SK-N-SH (cell line): ENCODE measurements at regions of chr19 and their contacts with region 1.

Region 1: DNA sequence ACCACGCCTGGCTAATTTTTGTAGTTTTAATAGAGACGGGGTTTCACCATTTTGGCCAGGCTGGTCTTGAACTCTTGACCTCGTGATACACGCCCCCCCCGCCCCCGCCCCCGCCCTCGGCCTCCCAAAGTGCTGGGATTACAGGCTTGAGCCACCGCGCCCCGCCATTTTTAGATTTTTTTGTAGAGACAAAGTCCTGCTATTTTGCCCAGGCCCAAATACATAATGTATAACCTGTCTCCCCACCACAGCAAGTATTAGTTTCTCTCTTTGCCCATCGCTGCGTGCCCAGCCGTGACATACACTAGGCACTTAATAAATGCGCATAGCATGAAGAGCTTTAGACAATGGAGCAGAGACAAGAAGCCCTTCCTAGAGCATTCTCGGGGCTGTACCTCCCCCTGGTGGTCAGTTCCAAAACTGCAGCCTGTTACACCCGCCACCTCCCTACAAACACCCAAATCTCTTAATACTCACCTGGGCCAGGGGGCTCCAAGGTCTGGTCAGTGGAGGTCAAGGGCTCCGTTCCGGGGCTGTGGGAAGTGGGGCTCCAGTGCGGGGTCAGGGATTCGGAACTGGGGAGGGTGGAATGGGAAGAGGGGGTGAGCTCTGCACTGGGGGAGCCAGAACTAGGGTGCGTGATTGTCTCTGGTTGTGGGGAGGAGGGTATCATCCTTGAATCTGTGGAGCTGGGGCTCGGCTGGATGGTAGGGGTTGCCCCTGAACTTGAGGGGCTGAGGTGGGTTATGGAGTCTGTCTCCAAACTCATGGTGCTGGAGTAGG is 22.5 kb downstream of the IQCN start:
- DNase-seq: peak; percentile 86
- H3K4me3 ChIP-seq: no peak overlapping the region
- H3K27ac ChIP-seq: no peak overlapping the region
- H3K4me1 ChIP-seq: no peaks in the 10 kb centered on the region
- H3K27me3 ChIP-seq: peaks cover 19% of the 10 kb centered on the region
- CTCF ChIP-seq: peak; percentile 96
- EP300 ChIP-seq: no peak
- RAD21 ChIP-seq: peak; percentile 96

Region 2: DNA sequence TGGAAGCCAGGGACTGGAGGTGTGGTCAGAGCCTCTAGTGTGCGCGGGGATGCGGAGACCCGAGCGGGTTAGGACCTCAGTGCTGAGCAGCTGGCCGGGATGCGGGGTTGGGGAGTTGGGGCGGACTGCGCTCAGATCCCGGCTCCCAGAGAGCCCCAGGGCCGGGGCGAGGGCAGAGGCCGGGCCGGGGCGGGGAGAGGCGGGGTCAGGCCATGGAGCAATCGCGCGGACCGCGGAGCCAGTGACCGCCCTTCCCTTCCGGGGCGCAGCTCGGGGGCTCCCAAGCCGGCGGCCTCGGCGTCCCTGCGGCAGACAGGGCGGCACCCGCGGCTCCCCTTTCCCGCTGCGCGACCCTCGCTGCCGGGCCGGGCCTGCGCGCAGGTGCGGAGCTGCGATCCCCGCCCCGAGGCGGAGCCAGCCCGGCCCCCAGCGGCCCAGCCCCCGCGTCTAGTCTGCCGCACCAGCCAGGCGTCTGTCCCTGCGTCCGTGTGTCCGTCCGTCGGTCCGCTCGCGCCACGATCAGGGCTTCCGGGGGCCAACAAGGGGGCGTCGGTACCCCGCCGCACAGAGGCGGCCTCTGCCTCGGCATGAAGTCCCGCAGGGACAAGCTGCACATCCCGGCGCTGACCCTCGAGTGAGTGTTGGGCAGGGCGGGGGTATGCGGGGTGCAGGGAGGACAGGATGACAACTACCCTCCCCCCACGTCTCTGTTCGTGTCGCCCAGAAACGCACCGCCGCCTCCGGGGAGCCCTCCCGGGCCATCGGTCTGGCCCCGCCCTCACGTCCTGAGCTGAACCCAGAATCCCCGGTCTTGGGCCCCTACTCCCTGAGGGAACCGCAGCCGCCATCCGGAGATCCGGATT is 141.8 kb before region 1 on chr19:
- CTCF ChIA-PET with region 1: interaction called, 22 read pairs
- POLR2A ChIA-PET with region 1: no interaction called
- DNase-seq: peak; percentile 83
- H3K4me3 ChIP-seq: peak overlapping the region; percentile 63 to 80
- H3K27ac ChIP-seq: peak overlapping the region in 1 of 2 experiments; percentile 43; a peak in 1 of 4 replicates
- H3K4me1 ChIP-seq: peaks cover 0 to 12% of the 10 kb centered on the region in 2 experiments; a peak in 1 of 4 replicates
- H3K27me3 ChIP-seq: no peaks in the 10 kb centered on the region
- CTCF ChIP-seq: no peak
- EP300 ChIP-seq: no peak
- RAD21 ChIP-seq: no peak

Region 3: GRCh38 chr19:18173572-18174288 is 78.0 kb before region 1 on chr19 and contains the start of gene IFI30:
- CTCF ChIA-PET with region 1: interaction called, 10 read pairs
- POLR2A ChIA-PET with region 1: no interaction called
- DNase-seq: peak; percentile 88
- H3K4me3 ChIP-seq: peak within 1 kb of the TSS; percentile 63 to 78
- H3K27ac ChIP-seq: no peak within 1 kb of the TSS; a peak in 1 of 4 replicates
- H3K4me1 ChIP-seq: peaks cover 0 to 8% of the 10 kb centered on the region in 2 experiments; a peak in 1 of 4 replicates
- H3K27me3 ChIP-seq: no peaks in the 10 kb centered on the region
- CTCF ChIP-seq: no peak
- EP300 ChIP-seq: no peak
- RAD21 ChIP-seq: no peak
- polyA plus RNA-seq, gene IFI30: 10.7 and 11.6 TPM in 2 replicates

Region 4: GRCh38 chr19:18203863-18204393 is 47.9 kb before region 1 on chr19 and contains the start of gene RAB3A:
- CTCF ChIA-PET with region 1: interaction called, 505 read pairs
- POLR2A ChIA-PET with region 1: interaction called, 7 read pairs
- DNase-seq: peak; percentile 96
- H3K4me3 ChIP-seq: peak within 1 kb of the TSS; percentile 71 to 82
- H3K27ac ChIP-seq: peak within 1 kb of the TSS; percentile 85 to 93
- H3K4me1 ChIP-seq: peaks cover 4 to 20% of the 10 kb centered on the region in 2 experiments; a peak in 2 of 4 replicates
- H3K27me3 ChIP-seq: no peaks in the 10 kb centered on the region
- CTCF ChIP-seq: no peak
- EP300 ChIP-seq: no peak
- RAD21 ChIP-seq: no peak
- polyA plus RNA-seq, gene RAB3A: 9.1 and 9.7 TPM in 2 replicates

Region 5: DNA sequence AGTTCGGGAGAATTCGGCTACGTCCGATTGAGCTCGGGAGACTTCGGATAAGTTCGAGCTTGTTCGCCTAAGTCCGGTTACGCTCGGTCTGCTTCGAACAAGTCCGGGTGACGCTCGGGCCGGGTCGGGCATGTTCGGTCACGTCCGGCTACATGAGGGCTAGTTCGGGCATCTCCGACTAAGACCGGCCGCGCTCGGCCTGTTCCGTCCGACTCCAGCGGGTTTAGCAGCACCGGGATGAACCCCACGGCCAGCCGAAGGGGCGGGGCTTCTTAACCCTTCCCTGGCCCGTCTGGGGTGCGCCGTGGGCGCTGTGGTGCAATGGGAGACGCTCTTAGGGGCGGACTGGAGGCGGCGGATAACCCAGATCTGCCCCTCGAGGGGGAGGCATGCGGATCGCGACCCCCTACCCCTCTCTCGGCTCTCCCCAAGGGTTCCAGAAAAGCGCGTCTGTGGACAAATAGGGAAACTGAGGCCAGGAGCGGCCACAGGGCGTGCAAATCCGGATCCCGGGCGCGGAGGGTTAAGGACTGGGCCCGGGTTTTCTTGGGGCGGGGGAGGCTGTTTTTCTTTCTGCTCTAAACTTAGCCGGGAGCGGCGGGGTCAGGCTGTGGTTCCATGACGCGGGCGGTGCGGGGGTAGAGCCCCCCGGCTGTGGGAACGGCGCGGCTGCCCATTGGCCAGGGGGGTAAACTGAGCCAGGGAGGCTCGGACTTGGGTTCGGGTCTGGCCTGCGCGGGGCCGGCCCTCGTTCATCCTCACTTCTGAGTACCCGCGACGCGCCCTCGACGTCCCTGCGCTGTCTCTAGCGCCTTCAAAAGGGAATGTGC is 27.0 kb before region 1 on chr19:
- CTCF ChIA-PET with region 1: interaction called, 81 read pairs
- POLR2A ChIA-PET with region 1: interaction called, 3 read pairs
- DNase-seq: peak; percentile 99
- H3K4me3 ChIP-seq: peak overlapping the region; percentile 55 to 59
- H3K27ac ChIP-seq: peak overlapping the region in 1 of 2 experiments; percentile 62; a peak in 1 of 4 replicates
- H3K4me1 ChIP-seq: peaks cover 0 to 19% of the 10 kb centered on the region in 2 experiments; a peak in 1 of 4 replicates
- H3K27me3 ChIP-seq: no peaks in the 10 kb centered on the region
- CTCF ChIP-seq: no peak
- EP300 ChIP-seq: no peak
- RAD21 ChIP-seq: no peak

Region 6: DNA sequence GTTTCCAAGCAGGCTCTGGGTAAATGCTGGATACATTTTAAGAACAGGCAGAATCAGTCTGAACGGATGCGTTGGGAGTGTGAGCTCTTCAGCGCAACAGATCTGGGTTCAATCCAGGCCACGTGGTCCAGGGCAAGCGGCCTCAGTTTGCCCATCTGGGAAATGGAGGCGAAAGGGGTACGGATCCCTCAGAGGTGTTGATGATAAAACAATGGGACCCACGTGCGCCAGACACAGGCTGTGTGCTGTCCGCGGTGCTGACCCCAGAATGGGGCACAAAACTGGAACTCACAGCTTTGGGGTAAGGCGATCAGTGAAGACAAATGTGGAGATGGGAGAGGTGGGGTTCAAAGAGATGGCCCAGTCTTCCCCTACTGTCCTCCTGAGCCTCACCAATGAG is 12.5 kb before region 1 on chr19:
- CTCF ChIA-PET with region 1: interaction called, 82 read pairs
- POLR2A ChIA-PET with region 1: interaction called, 3 read pairs
- DNase-seq: no peak
- H3K4me3 ChIP-seq: no peak overlapping the region
- H3K27ac ChIP-seq: no peak overlapping the region
- H3K4me1 ChIP-seq: no peaks in the 10 kb centered on the region
- H3K27me3 ChIP-seq: no peaks in the 10 kb centered on the region
- CTCF ChIP-seq: no peak
- EP300 ChIP-seq: no peak
- RAD21 ChIP-seq: no peak

Region 7: GRCh38 chr19:18322759-18323460 is 71.1 kb after region 1 on chr19 and contains the start of gene LSM4:
- CTCF ChIA-PET with region 1: interaction called, 12 read pairs
- POLR2A ChIA-PET with region 1: no interaction called
- DNase-seq: peak; percentile 97
- H3K4me3 ChIP-seq: peak within 1 kb of the TSS; percentile 72 to 89
- H3K27ac ChIP-seq: peak within 1 kb of the TSS; percentile 88 to 93
- H3K4me1 ChIP-seq: peaks cover 19 to 30% of the 10 kb centered on the region in 2 experiments; a peak in 3 of 4 replicates
- H3K27me3 ChIP-seq: no peaks in the 10 kb centered on the region
- CTCF ChIP-seq: peak; percentile 22
- EP300 ChIP-seq: no peak; a peak in 1 of 4 replicates
- RAD21 ChIP-seq: peak; percentile 55
- polyA plus RNA-seq, gene LSM4: 235 and 277 TPM in 2 replicates